Activated naive CD4-positive, alpha-beta T cell treated with anti-CD3 and anti-CD28 coated beads for 36 hours (primary cell): ENCODE measurements at regions of chr1 and their contacts with region 1.

Region 1: GRCh38 chr1:64744492-64745180 is at the start of gene RAVER2:
- DNase-seq: peak; percentile 78
- H3K4me3 Mint-ChIP-seq: peak within 1 kb of the TSS; percentile 80
- H3K27ac Mint-ChIP-seq: peak within 1 kb of the TSS; percentile 36
- H3K4me1 Mint-ChIP-seq: peaks cover 7% of the 10 kb centered on the region
- H3K27me3 Mint-ChIP-seq: peaks cover 3% of the 10 kb centered on the region
- total RNA-seq, gene RAVER2: 2.3 to 2.5 TPM

Region 2: GRCh38 chr1:64268653-64269557 is 475.7 kb before region 1 on chr1:
- CTCF ChIA-PET with region 1: no interaction called
- intact Hi-C with region 1: loop called (anchors 2 kb)
- DNase-seq: peak; percentile 85
- H3K4me3 Mint-ChIP-seq: no peak overlapping the region
- H3K27ac Mint-ChIP-seq: no peak overlapping the region
- H3K4me1 Mint-ChIP-seq: peaks cover 2% of the 10 kb centered on the region
- H3K27me3 Mint-ChIP-seq: peaks cover 15% of the 10 kb centered on the region

Region 3: GRCh38 chr1:64686828-64687724 is 57.6 kb before region 1 on chr1:
- CTCF ChIA-PET with region 1: no interaction called
- intact Hi-C with region 1: loop called (anchors 2 kb)
- DNase-seq: peak; percentile 39
- H3K4me3 Mint-ChIP-seq: no peak overlapping the region
- H3K27ac Mint-ChIP-seq: no peak overlapping the region
- H3K4me1 Mint-ChIP-seq: peaks cover 5% of the 10 kb centered on the region
- H3K27me3 Mint-ChIP-seq: no peaks in the 10 kb centered on the region

Region 4: DNA sequence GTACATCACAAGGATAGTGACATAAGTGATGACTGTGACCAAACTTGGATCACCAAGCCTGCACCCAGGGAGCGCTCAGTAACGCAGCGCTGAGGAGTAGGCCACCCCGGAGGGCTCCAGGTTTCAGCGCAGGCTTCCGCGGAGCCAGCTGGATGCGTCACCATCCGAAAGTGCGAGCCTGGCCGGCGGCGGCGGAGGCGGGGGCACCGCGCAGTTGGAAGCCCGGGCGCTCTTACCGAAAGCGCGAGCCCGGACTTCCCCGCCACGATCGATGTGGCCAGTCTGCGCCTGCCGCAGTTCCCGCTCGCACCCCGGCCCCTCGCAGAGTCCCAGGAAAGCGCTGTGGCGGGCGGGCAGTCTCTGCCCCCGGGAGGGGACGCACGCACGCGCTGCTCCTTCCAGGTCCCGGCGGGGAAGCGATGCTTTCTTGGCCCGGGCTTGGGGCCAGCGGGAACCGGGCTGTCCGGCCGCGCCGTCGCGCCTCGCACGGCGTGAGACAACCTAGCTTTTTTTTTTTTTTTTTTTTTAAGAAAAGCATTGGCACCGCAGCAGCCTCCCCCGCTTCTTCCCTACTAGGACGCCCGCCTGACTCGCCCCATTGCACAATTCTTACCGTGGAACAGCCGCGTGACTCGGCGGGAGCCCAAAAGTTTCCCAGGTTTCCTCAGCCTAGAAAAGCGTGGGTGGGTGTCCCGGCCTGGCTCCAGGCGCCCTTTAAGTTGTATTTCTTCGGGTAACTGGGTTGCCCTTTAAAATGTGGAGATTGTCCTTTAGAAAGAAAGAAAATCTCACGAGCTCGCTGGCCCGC is 258.1 kb after region 1 on chr1:
- CTCF ChIA-PET with region 1: no interaction called
- intact Hi-C with region 1: loop called (anchors 1 kb)
- DNase-seq: peak; percentile 81
- H3K4me3 Mint-ChIP-seq: peak overlapping the region; percentile 82
- H3K27ac Mint-ChIP-seq: peak overlapping the region; percentile 88
- H3K4me1 Mint-ChIP-seq: peaks cover 35% of the 10 kb centered on the region
- H3K27me3 Mint-ChIP-seq: no peaks in the 10 kb centered on the region

Region 5: GRCh38 chr1:65075123-65075976 is 330.7 kb after region 1 on chr1:
- CTCF ChIA-PET with region 1: interaction called, 6 read pairs
- intact Hi-C with region 1: loop called (anchors 1 kb)
- DNase-seq: peak; percentile 84
- H3K4me3 Mint-ChIP-seq: no peak overlapping the region
- H3K27ac Mint-ChIP-seq: no peak overlapping the region
- H3K4me1 Mint-ChIP-seq: peaks cover 20% of the 10 kb centered on the region
- H3K27me3 Mint-ChIP-seq: no peaks in the 10 kb centered on the region

Region 6: GRCh38 chr1:65209005-65209885 is 464.6 kb after region 1 on chr1:
- CTCF ChIA-PET with region 1: no interaction called
- intact Hi-C with region 1: loop called (anchors 5 kb)
- DNase-seq: peak; percentile 28
- H3K4me3 Mint-ChIP-seq: no peak overlapping the region
- H3K27ac Mint-ChIP-seq: no peak overlapping the region
- H3K4me1 Mint-ChIP-seq: peaks cover 23% of the 10 kb centered on the region
- H3K27me3 Mint-ChIP-seq: peaks cover 3% of the 10 kb centered on the region

Region 7: DNA sequence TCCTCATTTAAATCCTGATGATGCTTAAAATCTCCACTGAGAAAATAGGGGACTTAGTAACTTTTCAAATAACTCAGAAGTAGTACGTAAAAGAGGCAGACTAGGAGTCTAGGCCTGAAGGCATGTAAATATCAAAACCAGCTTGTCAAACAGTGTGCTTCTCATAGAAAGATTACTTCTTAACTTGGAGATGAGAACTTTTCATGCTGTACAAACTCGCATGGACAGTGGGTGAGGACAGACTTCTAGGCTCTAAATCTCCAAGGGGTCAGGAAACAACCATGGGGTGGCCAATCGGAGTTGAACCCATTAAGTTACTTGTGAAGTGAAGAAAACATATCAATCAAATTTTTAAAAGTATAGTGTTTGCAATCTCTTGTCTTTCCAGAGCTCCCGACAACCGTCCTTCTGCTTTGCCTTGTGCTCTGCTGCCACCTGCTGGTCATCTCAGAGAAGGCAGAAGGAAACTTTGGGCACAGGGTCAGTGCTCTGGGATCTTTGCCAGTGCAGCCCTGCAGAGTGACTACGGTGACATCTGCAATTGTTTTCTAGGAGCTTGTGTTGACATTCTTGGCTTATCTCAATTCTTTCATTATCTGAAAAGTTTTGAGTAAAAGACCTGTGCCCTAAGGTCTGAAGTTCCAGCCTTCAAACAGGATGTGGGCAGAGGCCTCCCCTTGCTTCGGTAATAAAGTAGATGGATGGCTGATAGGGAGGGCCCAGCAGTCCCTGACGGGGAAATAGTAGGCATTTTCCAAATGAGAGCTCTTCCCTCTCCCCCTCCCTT is 943.0 kb after region 1 on chr1:
- CTCF ChIA-PET with region 1: no interaction called
- intact Hi-C with region 1: loop called (anchors 10 kb)
- DNase-seq: peak; percentile 88
- H3K4me3 Mint-ChIP-seq: no peak overlapping the region
- H3K27ac Mint-ChIP-seq: no peak overlapping the region
- H3K4me1 Mint-ChIP-seq: peaks cover 6% of the 10 kb centered on the region
- H3K27me3 Mint-ChIP-seq: peaks cover 9% of the 10 kb centered on the region